Activated naive CD4-positive, alpha-beta T cell treated with anti-CD3 and anti-CD28 coated beads for 36 hours (primary cell): ENCODE measurements at regions of chr7 and their contacts with region 1.

Region 1: DNA sequence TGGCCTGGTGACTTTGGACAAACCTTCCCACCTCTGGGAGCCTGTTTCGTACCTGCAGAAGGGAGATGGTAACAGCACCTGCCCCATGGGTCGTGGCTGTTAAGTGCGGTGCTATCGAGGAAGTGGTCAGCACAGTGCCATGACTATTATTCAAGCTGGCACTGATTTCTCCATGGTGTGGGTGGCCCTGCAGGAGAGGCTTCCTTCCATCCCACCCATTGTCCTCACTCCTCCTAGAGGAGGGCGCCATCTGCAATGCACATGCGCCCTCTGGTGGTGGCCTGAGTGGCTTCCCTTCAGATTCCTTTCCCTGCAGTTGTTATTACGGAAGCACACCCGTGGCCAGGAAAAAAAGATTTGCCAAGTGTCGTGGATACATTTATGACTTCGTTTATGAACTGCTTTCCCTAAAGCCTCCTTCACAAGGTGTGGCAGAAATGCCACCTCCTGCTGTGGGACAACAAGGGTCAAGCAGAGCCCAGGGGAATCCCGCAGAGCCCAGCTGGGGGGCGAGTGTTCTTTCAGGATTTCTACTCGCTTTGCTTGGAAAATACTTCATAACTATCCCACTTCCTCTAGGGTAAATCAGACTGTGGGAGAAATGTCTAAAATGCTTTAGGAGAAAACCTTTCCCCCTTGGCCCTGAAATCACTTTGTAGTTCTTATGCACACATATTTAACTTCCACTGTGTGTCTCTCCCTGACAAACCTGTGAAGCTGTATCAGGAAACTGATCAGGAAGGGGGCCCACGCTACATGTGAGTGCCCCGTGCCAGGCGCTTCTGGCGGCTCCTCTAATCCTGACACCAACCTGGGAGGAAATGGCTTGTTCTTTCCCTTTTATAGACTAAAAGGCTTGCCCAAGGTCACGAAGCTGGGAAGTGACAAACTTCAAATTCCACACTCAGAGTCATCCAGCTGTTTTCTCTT is 98.0 kb upstream of the ANLN start:
- DNase-seq: peak; percentile 79
- H3K4me3 Mint-ChIP-seq: peak overlapping the region; percentile 59
- H3K27ac Mint-ChIP-seq: no peak overlapping the region
- H3K4me1 Mint-ChIP-seq: peaks cover 24% of the 10 kb centered on the region
- H3K27me3 Mint-ChIP-seq: no peaks in the 10 kb centered on the region

Region 2: DNA sequence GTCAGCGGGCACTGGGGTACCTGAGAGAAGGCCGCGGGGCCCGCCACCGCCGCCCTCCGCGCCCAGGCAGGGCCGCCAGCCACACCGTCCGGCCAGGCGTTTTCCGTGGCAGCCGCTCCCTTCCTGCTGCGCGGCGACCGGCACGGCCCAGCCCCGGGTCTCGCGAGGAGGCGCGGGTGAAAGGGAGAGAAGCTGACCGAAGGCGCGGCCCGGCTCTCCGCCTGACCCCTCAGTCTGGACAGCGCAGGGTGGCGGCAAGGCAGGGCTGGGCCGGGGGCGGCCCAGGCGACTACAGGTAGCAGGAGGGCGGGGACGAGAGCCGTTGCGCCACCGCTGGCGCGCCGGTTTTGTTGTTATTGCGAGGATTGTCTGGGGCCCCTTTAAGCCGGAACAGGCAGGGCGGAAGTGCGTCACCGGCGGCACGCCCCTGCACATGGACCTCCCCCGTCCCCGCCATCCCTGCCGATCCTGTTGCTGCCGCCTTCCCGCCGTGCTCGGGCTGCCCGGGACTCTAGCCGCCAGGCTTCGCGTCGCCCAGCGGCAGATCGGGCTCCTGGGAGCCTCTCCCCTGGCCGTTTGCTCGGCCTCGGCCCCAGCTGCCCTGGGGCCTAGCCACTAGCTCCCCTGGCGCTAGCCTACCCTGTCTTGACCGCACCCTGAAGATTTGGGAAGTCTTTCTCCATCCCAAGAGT is 596.7 kb before region 1 on chr7 and contains the start of gene HERPUD2:
- CTCF ChIA-PET with region 1: no interaction called
- intact Hi-C with region 1: loop called (anchors 5 kb)
- DNase-seq: peak; percentile 92
- H3K4me3 Mint-ChIP-seq: peak within 1 kb of the TSS; percentile 94
- H3K27ac Mint-ChIP-seq: peak within 1 kb of the TSS; percentile 96
- H3K4me1 Mint-ChIP-seq: peaks cover 35% of the 10 kb centered on the region
- H3K27me3 Mint-ChIP-seq: no peaks in the 10 kb centered on the region
- total RNA-seq, gene HERPUD2: 20.3 to 22.4 TPM

Region 3: GRCh38 chr7:36021367-36021766 is 270.3 kb before region 1 on chr7:
- CTCF ChIA-PET with region 1: interaction called, 7 read pairs
- intact Hi-C with region 1: loop called (anchors 1 kb)
- DNase-seq: peak; percentile 38
- H3K4me3 Mint-ChIP-seq: no peak overlapping the region
- H3K27ac Mint-ChIP-seq: no peak overlapping the region
- H3K4me1 Mint-ChIP-seq: no peaks in the 10 kb centered on the region
- H3K27me3 Mint-ChIP-seq: no peaks in the 10 kb centered on the region

Region 4: DNA sequence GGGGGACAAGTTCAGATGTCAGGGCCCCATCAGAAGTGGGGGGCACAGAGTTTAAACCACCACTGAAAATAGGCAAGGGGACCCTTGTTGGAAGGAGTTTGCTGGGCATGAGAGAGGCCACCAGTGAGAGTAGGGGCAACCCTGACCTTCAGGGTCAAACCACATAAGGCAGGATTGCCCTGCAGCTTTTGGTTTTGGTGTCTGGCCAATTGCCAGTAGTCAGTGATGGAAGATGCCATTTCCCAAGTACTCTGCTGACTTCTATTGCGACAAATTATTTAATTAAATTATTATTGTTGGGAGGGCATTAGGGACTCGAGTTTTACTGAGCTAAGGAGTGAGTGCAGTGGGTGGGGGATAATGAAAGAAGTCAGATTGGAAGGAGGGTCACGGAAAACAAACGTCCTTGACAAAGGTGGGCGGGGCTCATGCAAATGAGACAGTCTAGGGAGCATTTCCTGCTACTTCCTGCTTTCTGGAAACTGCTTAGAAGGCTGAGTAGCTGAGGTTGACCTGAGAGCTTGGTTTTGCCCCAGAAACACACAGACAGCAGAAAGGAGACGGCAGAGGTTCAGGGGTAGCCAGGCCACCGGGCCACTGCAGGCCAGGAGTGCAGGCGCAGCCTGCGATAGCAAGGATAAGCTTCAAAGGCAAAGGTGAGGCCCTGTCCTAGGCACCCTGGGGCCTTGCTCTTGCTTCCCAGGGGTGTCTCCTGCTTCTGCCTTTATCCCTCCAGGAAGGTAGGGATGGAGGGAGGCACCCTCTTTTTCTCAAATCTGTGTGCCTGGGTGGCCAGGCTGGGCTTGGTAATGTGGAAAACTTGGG is 23.9 kb after region 1 on chr7:
- CTCF ChIA-PET with region 1: interaction called, 11 read pairs
- intact Hi-C with region 1: loop called (anchors 2 kb)
- DNase-seq: no peak
- H3K4me3 Mint-ChIP-seq: no peak overlapping the region
- H3K27ac Mint-ChIP-seq: no peak overlapping the region
- H3K4me1 Mint-ChIP-seq: no peaks in the 10 kb centered on the region
- H3K27me3 Mint-ChIP-seq: no peaks in the 10 kb centered on the region

Region 5: GRCh38 chr7:36600869-36601530 is 309.3 kb after region 1 on chr7:
- CTCF ChIA-PET with region 1: no interaction called
- intact Hi-C with region 1: no loop called
- DNase-seq: peak; percentile 60
- H3K4me3 Mint-ChIP-seq: no peak overlapping the region
- H3K27ac Mint-ChIP-seq: no peak overlapping the region
- H3K4me1 Mint-ChIP-seq: peaks cover 73% of the 10 kb centered on the region
- H3K27me3 Mint-ChIP-seq: no peaks in the 10 kb centered on the region

Region 6: DNA sequence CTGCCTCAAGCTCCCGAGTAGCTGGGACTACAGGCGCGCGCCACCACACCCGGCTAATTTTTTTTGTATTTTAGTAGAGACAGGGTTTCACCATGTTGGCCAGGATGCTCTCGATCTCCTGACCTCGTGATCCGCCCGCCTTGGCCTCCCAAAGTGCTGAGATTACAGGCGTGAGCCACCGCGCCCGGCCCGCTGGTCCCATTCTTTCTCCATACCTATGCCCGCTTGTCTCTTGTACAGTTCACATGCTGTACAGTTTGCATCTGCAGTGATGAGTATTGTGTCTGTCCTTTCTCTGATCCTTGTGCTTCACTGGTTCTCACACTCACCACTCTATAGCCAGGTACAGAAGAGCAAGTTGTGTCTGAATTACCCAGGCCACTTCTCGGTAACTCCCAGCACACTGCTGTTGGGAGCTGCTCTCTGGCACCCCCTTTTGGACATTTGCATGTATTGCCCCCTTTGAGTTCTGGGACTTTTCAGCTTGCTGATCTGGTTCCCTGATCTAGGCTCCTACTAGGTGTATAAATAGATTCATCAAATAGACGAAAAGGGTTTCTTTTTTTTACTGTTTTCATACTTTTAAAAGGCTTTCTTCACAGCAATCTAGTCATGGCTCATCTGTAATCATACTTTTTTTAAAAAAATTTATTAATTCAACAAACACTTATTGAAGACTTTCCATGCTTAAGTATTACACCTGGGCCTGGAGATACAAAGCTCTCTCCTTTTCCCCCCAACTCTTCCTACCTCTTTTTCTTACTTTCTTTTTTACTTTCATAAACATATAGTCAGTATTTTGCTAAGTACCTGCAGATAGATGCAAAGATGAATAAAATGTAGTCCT is 379.2 kb after region 1 on chr7:
- CTCF ChIA-PET with region 1: no interaction called
- intact Hi-C with region 1: no loop called
- DNase-seq: peak; percentile 85
- H3K4me3 Mint-ChIP-seq: no peak overlapping the region
- H3K27ac Mint-ChIP-seq: no peak overlapping the region
- H3K4me1 Mint-ChIP-seq: peaks cover 29% of the 10 kb centered on the region
- H3K27me3 Mint-ChIP-seq: peaks cover 2% of the 10 kb centered on the region

Region 7: GRCh38 chr7:37359662-37360444 is 1068.2 kb after region 1 on chr7:
- CTCF ChIA-PET with region 1: no interaction called
- intact Hi-C with region 1: loop called (anchors 5 kb)
- DNase-seq: peak; percentile 76
- H3K4me3 Mint-ChIP-seq: peak overlapping the region; percentile 44
- H3K27ac Mint-ChIP-seq: peak overlapping the region; percentile 95
- H3K4me1 Mint-ChIP-seq: peaks cover 90% of the 10 kb centered on the region
- H3K27me3 Mint-ChIP-seq: no peaks in the 10 kb centered on the region